ENCODE measurements at regions of chr12 and their contacts with region 1.

Region 1: DNA sequence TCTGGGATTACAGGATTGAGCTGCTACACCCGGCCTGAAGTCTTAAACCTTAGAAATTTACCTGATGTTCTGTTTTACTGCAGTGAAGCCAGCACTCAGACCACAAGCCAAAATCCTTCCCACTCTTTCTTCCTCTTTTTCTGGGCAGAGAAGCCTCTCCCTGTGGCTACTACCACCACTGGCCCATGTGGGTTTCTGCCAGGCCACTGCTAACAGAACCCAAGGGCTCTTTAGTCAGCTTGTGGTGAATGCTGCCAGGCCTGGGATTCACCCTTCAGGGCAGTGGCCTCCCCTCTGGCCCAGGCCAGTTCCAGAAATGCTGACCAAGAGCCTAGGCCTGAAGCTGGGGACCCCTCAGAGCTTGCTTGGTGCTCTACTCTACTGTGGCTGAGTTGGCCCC is 35.3 kb downstream of the GAS2L3 start:
- DNase-seq: no peak
- H3K4me3 ChIP-seq: no peak overlapping the region
- H3K27ac ChIP-seq: no peak overlapping the region
- H3K4me1 ChIP-seq: no peaks in the 10 kb centered on the region
- CTCF ChIP-seq: no peak

Region 2: DNA sequence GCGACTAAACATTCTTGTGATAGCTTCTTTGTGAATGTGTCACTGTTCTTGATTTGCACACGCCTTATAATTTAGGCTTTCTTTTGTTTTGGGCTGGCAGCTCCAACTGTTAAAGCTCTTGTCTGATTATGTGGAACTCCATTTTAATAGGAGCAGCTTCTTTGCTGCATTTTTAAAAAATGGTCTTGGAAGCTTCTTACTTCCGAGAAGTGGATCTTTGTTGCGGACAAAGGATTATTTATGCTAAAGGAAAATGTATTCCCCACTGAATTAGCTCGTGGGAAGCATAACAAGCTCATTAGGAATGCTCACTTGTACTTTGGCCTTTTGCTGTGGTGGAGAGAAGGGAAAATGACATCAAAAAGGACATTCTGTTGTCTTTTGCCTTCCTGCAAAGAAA is 15.3 kb before region 1 on chr12:
- CTCF ChIA-PET with region 1: no interaction called
- POLR2A ChIA-PET with region 1: interaction called, 13 read pairs
- intact Hi-C with region 1: no loop called
- DNase-seq: no peak
- H3K4me3 ChIP-seq: no peak overlapping the region
- H3K27ac ChIP-seq: no peak overlapping the region
- H3K4me1 ChIP-seq: no peaks in the 10 kb centered on the region
- CTCF ChIP-seq: no peak

Measured in OCI-LY7 (cell line).